CD4-positive, alpha-beta T cell (primary cell): ENCODE measurements at regions of chr22 and their contacts with region 1.

Region 1: DNA sequence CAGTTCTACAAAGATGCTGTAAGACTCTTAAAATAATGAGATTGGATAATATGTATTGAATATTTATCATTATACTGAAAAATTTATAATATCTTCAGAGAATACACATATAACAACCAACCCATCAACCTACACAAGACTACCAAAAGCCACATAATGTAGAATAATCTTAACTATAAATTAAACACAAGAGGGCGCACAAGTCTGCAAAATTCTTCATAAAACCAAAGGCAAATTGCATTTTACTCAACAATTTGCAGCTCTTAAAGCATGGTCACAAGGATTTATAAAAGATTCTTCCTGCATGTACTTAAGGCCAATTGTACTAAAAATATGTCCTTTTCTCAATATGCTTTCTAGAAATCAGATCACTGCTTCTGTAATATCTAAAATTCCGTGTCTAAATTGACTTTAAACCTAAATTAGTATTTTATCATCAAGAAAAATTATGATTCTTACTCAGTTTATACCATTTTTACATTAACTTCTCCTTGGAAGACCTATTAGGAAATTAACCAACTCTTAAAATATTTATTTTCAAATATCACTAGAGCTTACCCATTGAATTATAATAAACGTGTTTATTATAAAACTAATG is 79.0 kb downstream of the TTC28 start:
- DNase-seq: peak in 4 of 14 experiments; percentile 11 to 70 (median 66)
- ATAC-seq: no peak
- H3K4me3 ChIP-seq: no peak overlapping the region
- H3K4me3 Mint-ChIP-seq: no peak overlapping the region
- H3K27ac ChIP-seq: no peak overlapping the region
- H3K27ac Mint-ChIP-seq: no peak overlapping the region
- H3K4me1 ChIP-seq: no peaks in the 10 kb centered on the region
- H3K4me1 Mint-ChIP-seq: no peaks in the 10 kb centered on the region
- H3K27me3 ChIP-seq: peaks cover 0 to 12% of the 10 kb centered on the region in 2 experiments
- H3K27me3 Mint-ChIP-seq: peaks cover 46% of the 10 kb centered on the region
- CTCF ChIP-seq: peak; percentile 82

Region 2: DNA sequence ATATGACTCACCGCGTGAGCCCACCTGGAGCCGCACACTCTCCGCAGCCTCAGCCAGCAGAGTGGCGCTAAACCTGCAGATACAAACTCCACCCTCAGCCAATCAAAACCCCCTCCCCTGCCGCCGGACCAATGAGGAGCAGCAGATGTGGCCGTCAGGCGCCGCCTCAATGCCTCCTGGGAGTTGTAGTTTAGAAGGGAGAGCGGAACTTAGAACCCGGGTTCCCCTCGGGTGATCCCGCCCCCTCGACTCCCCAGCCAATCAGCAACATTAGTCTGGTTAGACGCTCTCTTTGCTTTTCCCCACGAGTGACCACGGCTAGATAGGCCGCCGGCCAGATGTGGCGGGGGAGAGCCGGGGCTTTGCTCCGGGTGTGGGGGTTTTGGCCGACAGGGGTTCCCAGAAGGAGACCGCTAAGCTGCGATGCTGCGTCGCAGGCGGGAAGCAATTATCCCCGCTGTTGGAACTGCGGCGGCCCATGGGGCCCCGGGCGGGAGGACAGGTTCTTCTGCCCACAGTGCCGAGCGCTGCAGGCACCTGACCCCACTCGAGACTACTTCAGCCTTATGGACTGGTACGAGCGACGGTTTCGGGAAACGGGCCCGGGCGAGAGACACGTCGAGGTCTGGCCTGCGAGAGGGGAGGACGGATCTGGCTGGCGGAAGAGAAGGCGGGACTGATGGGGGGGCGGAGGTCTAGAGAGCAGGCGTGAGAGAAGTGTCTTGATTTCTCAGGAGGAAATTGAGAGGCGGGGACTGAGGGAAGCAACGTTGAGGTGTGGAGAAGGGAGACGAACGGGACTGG is 141.3 kb after region 1 on chr22 and contains the starts of genes CHEK2 and HSCB:
- CTCF ChIA-PET with region 1: no interaction called
- POLR2A ChIA-PET with region 1: no interaction called
- intact Hi-C with region 1: loop called in 1 of 2 experiments (anchors 1 kb)
- DNase-seq: peak; percentile 90 to 99 (median 96)
- ATAC-seq: peak; percentile 93
- H3K4me3 ChIP-seq: peak within 1 kb of the TSS; percentile 98
- H3K4me3 Mint-ChIP-seq: peak within 1 kb of the TSS; percentile 98
- H3K27ac ChIP-seq: peak within 1 kb of the TSS; percentile 96
- H3K27ac Mint-ChIP-seq: peak within 1 kb of the TSS; percentile 94
- H3K4me1 ChIP-seq: peaks cover 21% of the 10 kb centered on the region
- H3K4me1 Mint-ChIP-seq: peaks cover 34% of the 10 kb centered on the region
- H3K27me3 ChIP-seq: no peaks in the 10 kb centered on the region
- H3K27me3 Mint-ChIP-seq: no peaks in the 10 kb centered on the region
- CTCF ChIP-seq: no peak
- total RNA-seq, gene CHEK2: 2.6 to 4.0 TPM
- total RNA-seq, gene HSCB: 3.4 to 3.7 TPM

Region 3: DNA sequence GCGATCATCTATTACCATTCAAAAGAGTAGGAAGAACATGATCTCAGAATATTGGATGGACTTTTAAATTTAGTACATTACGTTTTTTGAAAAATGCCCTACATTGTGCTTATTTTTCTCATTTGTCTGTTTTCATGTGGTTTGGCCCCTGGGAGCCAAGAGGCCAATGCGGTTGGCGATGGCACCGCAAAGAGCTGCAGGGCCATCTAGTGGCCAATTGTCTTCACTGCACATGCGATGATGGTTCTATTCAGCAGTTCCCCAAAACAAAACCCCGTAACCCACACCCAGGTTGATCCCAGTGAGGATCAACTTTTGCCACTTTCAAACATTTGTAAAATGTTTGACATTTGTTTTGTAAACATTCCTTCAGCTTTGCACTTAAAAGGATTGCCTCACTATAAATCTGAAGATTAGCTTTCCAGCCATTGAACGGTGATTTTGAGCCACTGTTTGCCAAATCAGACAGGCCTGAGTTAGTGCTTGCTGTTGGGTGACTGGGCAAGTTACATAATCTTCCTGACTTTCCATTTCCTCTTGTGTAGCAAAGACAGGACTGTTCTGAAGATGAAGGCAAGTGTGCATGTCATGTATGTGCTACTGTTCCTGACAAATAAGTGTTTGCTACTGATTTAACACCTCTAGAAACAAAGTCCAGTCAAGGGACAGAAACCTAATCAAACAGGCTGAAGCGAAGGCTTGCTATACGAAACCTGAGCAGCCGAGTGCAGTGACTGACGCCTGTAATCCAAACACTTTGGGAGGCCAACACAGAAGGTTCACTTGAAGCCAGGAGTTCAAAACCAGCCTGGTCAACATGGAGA is 228.9 kb after region 1 on chr22:
- CTCF ChIA-PET with region 1: interaction called, 21 read pairs
- POLR2A ChIA-PET with region 1: interaction called, 11 read pairs
- intact Hi-C with region 1: loop called (anchors 1 kb)
- DNase-seq: peak; percentile 56 to 88 (median 70)
- ATAC-seq: peak; percentile 87
- H3K4me3 ChIP-seq: no peak overlapping the region
- H3K4me3 Mint-ChIP-seq: peak overlapping the region; percentile 22
- H3K27ac ChIP-seq: no peak overlapping the region
- H3K27ac Mint-ChIP-seq: no peak overlapping the region
- H3K4me1 ChIP-seq: peaks cover 8% of the 10 kb centered on the region
- H3K4me1 Mint-ChIP-seq: peaks cover 17% of the 10 kb centered on the region
- H3K27me3 ChIP-seq: no peaks in the 10 kb centered on the region
- H3K27me3 Mint-ChIP-seq: no peaks in the 10 kb centered on the region
- CTCF ChIP-seq: peak; percentile 100

Region 4: GRCh38 chr22:29040385-29041275 is 440.0 kb after region 1 on chr22:
- CTCF ChIA-PET with region 1: interaction called, 35 read pairs
- POLR2A ChIA-PET with region 1: no interaction called
- intact Hi-C with region 1: loop called (anchors 1 kb)
- DNase-seq: peak; percentile 40 to 85 (median 55)
- ATAC-seq: peak; percentile 75
- H3K4me3 ChIP-seq: no peak overlapping the region
- H3K4me3 Mint-ChIP-seq: no peak overlapping the region
- H3K27ac ChIP-seq: no peak overlapping the region
- H3K27ac Mint-ChIP-seq: no peak overlapping the region
- H3K4me1 ChIP-seq: no peaks in the 10 kb centered on the region
- H3K4me1 Mint-ChIP-seq: no peaks in the 10 kb centered on the region
- H3K27me3 ChIP-seq: no peaks in the 10 kb centered on the region
- H3K27me3 Mint-ChIP-seq: no peaks in the 10 kb centered on the region
- CTCF ChIP-seq: peak; percentile 97

Region 5: GRCh38 chr22:29245637-29246385 is 645.2 kb after region 1 on chr22:
- CTCF ChIA-PET with region 1: no interaction called
- POLR2A ChIA-PET with region 1: no interaction called
- intact Hi-C with region 1: loop called in 1 of 2 experiments (anchors 2 kb)
- DNase-seq: peak; percentile 49 to 78 (median 59)
- ATAC-seq: peak; percentile 95
- H3K4me3 ChIP-seq: no peak overlapping the region
- H3K4me3 Mint-ChIP-seq: no peak overlapping the region
- H3K27ac ChIP-seq: no peak overlapping the region
- H3K27ac Mint-ChIP-seq: no peak overlapping the region
- H3K4me1 ChIP-seq: peaks cover 4% of the 10 kb centered on the region
- H3K4me1 Mint-ChIP-seq: no peaks in the 10 kb centered on the region
- H3K27me3 ChIP-seq: no peaks in the 10 kb centered on the region
- H3K27me3 Mint-ChIP-seq: peaks cover 19% of the 10 kb centered on the region
- CTCF ChIP-seq: peak; percentile 96

Region 6: DNA sequence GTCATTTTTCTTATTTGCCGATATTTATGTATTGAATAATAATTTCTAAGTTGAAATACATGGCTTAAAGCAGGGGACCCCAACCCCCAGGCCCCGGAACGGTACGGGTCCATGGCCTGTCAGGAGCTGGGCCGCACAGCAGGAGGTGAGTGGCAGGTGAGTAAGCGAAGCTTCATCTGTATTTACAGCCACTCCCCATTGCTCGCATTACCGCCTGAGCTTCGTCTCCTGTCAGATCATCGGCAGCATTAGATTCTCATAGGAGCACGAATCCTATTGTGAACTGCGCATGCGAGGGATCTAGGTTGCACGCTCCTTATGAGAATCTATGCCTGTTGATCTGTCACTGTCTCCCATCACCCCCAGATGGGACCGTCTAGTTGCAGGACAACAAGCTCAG is 1161.6 kb after region 1 on chr22:
- CTCF ChIA-PET with region 1: no interaction called
- POLR2A ChIA-PET with region 1: no interaction called
- intact Hi-C with region 1: no loop called
- DNase-seq: no peak
- ATAC-seq: no peak
- H3K4me3 ChIP-seq: no peak overlapping the region
- H3K4me3 Mint-ChIP-seq: no peak overlapping the region
- H3K27ac ChIP-seq: no peak overlapping the region
- H3K27ac Mint-ChIP-seq: no peak overlapping the region
- H3K4me1 ChIP-seq: peaks cover 15% of the 10 kb centered on the region
- H3K4me1 Mint-ChIP-seq: peaks cover 21% of the 10 kb centered on the region
- H3K27me3 ChIP-seq: no peaks in the 10 kb centered on the region
- H3K27me3 Mint-ChIP-seq: no peaks in the 10 kb centered on the region
- CTCF ChIP-seq: no peak